GM10248 (cell line): ENCODE measurements at regions of chr5 and their contacts with region 1.

Region 1: GRCh38 chr5:56681346-56681745 is 134.0 kb upstream of the MAP3K1 start:
- DNase-seq: no peak
- CTCF ChIP-seq: no peak

Region 2: GRCh38 chr5:56447232-56447631 is 234.1 kb before region 1 on chr5:
- CTCF ChIA-PET with region 1: no interaction called
- POLR2A ChIA-PET with region 1: no interaction called
- DNase-seq: no peak
- CTCF ChIP-seq: no peak

Region 3: GRCh38 chr5:56670118-56670483 is 11.2 kb before region 1 on chr5:
- CTCF ChIA-PET with region 1: interaction called, 11 read pairs
- POLR2A ChIA-PET with region 1: no interaction called
- DNase-seq: peak; percentile 80
- CTCF ChIP-seq: no peak

Region 4: DNA sequence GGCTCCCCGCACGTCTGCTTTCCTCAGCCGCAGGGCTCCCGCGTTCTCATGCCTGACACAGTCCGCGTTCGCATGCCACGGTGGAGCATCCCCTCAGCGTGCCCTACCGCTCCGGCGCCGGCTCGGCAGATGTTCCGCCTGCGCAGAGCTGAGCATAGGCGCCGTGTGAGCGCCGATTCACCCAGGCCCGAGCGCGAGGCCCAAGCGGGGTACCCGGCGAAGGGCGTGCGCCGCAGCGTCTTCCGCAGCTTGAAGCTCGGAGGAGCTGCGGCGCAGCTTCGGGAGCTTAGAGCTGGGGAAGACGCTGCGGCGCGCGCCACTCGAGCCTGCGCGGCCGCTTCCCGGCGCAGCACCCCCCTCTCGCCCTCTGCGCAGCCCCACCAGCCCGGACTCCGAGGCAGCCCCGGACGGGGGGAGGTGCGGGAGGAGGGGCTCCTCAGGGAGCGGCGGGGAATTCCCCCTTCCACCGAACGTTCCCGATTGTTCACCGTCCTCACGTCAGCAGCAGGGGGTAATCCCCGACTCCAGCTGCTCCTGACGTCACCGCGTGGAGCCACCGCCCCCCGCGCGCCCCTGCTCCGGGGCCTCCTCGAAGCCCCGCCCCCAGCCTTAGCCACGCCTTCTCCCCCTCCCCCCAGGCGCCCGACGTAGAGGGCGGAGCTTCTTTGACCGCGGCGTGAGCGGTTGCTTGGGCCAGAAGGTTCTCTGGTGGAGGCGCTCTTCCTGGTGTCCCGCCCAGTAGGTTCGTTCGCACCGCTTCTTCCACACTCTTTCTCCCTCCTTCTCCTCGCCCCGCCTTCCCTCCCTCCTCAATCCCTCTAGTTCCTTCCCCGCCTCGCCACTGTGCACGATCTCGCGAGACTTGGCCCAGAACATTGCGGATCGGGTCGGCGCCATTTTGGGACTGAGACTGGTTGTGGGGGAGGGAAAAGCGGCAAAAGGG is 492.1 kb after region 1 on chr5 and contains the start of gene GPBP1:
- CTCF ChIA-PET with region 1: no interaction called
- POLR2A ChIA-PET with region 1: no interaction called
- DNase-seq: peak; percentile 98
- CTCF ChIP-seq: no peak